Tibial artery (tissue), 4 donors: ENCODE measurements at regions of chr6 and their contacts with region 1.

Region 1: DNA sequence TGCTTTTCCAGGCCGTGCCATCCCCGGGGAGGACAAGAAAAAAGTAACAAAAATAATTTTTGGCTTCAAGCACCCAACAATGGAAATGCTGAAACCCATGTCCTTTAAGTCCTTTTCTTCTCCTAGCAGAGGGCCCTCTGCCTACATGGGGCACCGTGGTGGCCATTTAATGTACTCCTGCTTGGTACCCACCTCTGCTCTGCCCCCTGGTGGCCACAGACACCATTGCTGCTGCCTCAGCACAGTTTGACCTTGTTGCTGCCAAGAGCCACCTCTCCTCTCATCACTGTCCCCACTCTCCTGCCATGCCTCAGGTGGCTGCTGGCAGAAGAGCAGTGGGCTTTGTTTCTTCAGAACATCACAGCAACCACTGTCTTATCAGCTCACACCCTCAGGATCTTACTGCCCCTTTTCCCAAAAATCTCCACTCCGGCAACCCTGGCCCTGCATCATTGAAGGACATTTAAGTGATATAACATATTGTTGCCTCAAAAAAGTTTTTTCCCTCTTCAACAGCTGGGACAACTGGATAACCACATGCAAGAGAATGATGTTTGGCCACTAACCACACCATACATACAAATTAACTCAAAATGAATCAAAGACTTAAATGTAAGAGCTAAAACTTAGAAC is 12.9 kb upstream of the ARMC2 start:
- DNase-seq: peak; percentile 90 to 92
- H3K4me3 ChIP-seq: no peak overlapping the region
- H3K27ac ChIP-seq: peak overlapping the region in 1 of 2 donors; percentile 13
- H3K4me1 ChIP-seq: peaks cover 0 to 18% (median 12%) of the 10 kb centered on the region in 4 donors
- H3K27me3 ChIP-seq: no peaks in the 10 kb centered on the region
- CTCF ChIP-seq: peak; percentile 89 to 97

Region 2: DNA sequence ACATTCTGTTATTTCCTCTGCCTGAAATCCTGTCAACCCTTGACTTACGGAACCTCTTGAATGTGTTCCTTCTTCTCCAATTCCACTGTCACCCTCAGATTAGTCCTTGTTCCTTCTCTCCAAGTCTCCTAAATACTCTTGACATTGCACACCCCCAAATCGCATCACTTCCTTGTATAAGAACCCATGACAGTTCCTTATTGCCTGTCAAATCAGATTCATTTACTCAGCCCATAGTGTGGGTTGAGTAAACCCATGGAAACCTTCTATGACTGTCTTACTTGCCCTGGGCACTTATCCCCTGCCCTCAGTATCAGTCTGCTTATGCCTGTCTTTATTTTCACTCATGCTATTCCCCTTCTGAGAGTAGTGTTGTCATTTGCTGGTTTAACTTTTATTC is 53.4 kb after region 1 on chr6:
- intact Hi-C with region 1: loop called (anchors 5 kb)
- DNase-seq: no peak
- H3K4me3 ChIP-seq: no peak overlapping the region
- H3K27ac ChIP-seq: no peak overlapping the region
- H3K4me1 ChIP-seq: peaks cover 0 to 9% (median 5%) of the 10 kb centered on the region in 4 donors
- H3K27me3 ChIP-seq: no peaks in the 10 kb centered on the region
- CTCF ChIP-seq: no peak